ENCODE measurements at regions of chr11 and their contacts with region 1.

Region 1: GRCh38 chr11:10808553-10809372 is at the start of gene EIF4G2:
- DNase-seq: peak; percentile 96 to 99 (median 97)
- ATAC-seq: peak; percentile 91
- H3K4me3 ChIP-seq: peak within 1 kb of the TSS; percentile 86
- H3K4me3 Mint-ChIP-seq: peak within 1 kb of the TSS; percentile 99
- H3K27ac ChIP-seq: peak within 1 kb of the TSS; percentile 95 to 99
- H3K27ac Mint-ChIP-seq: peak within 1 kb of the TSS; percentile 100
- H3K4me1 ChIP-seq: peaks cover 30% of the 10 kb centered on the region
- H3K4me1 Mint-ChIP-seq: peaks cover 59% of the 10 kb centered on the region
- H3K27me3 ChIP-seq: no peaks in the 10 kb centered on the region
- H3K27me3 Mint-ChIP-seq: no peaks in the 10 kb centered on the region
- CTCF ChIP-seq: no peak
- total RNA-seq, gene EIF4G2: 1,001 to 1,008 TPM

Region 2: GRCh38 chr11:9314291-9315036 is 1494.3 kb before region 1 on chr11 and contains the start of gene TMEM41B:
- CTCF ChIA-PET with region 1: no interaction called
- POLR2A ChIA-PET with region 1: interaction called, 4 read pairs
- intact Hi-C with region 1: loop called in 1 of 2 experiments (anchors 5 kb)
- DNase-seq: peak; percentile 97 to 100 (median 99)
- ATAC-seq: peak; percentile 93
- H3K4me3 ChIP-seq: peak within 1 kb of the TSS; percentile 86
- H3K4me3 Mint-ChIP-seq: peak within 1 kb of the TSS; percentile 97
- H3K27ac ChIP-seq: peak within 1 kb of the TSS; percentile 88 to 92
- H3K27ac Mint-ChIP-seq: peak within 1 kb of the TSS; percentile 96
- H3K4me1 ChIP-seq: peaks cover 22% of the 10 kb centered on the region
- H3K4me1 Mint-ChIP-seq: peaks cover 49% of the 10 kb centered on the region
- H3K27me3 ChIP-seq: no peaks in the 10 kb centered on the region
- H3K27me3 Mint-ChIP-seq: peaks cover 19% of the 10 kb centered on the region
- CTCF ChIP-seq: no peak
- total RNA-seq, gene TMEM41B: 41.4 to 42.7 TPM

Region 3: GRCh38 chr11:10750838-10751580 is 57.8 kb before region 1 on chr11 and contains the start of gene CTR9:
- CTCF ChIA-PET with region 1: no interaction called
- POLR2A ChIA-PET with region 1: interaction called, 58 read pairs
- intact Hi-C with region 1: loop called in 1 of 2 experiments (anchors 2 kb)
- DNase-seq: peak; percentile 82 to 96 (median 90)
- ATAC-seq: peak; percentile 86
- H3K4me3 ChIP-seq: peak within 1 kb of the TSS; percentile 95
- H3K4me3 Mint-ChIP-seq: peak within 1 kb of the TSS; percentile 97
- H3K27ac ChIP-seq: peak within 1 kb of the TSS; percentile 83 to 84
- H3K27ac Mint-ChIP-seq: peak within 1 kb of the TSS; percentile 93
- H3K4me1 ChIP-seq: peaks cover 14% of the 10 kb centered on the region
- H3K4me1 Mint-ChIP-seq: peaks cover 35% of the 10 kb centered on the region
- H3K27me3 ChIP-seq: no peaks in the 10 kb centered on the region
- H3K27me3 Mint-ChIP-seq: no peaks in the 10 kb centered on the region
- CTCF ChIP-seq: no peak
- total RNA-seq, gene CTR9: 34.0 to 34.7 TPM

Region 4: GRCh38 chr11:10824888-10825287 is 16.1 kb after region 1 on chr11:
- CTCF ChIA-PET with region 1: no interaction called
- POLR2A ChIA-PET with region 1: interaction called, 27 read pairs
- intact Hi-C with region 1: no loop called
- DNase-seq: no peak
- ATAC-seq: no peak
- H3K4me3 ChIP-seq: no peak overlapping the region
- H3K4me3 Mint-ChIP-seq: no peak overlapping the region
- H3K27ac ChIP-seq: no peak overlapping the region
- H3K27ac Mint-ChIP-seq: no peak overlapping the region
- H3K4me1 ChIP-seq: no peaks in the 10 kb centered on the region
- H3K4me1 Mint-ChIP-seq: peaks cover 7% of the 10 kb centered on the region
- H3K27me3 ChIP-seq: no peaks in the 10 kb centered on the region
- H3K27me3 Mint-ChIP-seq: no peaks in the 10 kb centered on the region
- CTCF ChIP-seq: no peak

Region 5: DNA sequence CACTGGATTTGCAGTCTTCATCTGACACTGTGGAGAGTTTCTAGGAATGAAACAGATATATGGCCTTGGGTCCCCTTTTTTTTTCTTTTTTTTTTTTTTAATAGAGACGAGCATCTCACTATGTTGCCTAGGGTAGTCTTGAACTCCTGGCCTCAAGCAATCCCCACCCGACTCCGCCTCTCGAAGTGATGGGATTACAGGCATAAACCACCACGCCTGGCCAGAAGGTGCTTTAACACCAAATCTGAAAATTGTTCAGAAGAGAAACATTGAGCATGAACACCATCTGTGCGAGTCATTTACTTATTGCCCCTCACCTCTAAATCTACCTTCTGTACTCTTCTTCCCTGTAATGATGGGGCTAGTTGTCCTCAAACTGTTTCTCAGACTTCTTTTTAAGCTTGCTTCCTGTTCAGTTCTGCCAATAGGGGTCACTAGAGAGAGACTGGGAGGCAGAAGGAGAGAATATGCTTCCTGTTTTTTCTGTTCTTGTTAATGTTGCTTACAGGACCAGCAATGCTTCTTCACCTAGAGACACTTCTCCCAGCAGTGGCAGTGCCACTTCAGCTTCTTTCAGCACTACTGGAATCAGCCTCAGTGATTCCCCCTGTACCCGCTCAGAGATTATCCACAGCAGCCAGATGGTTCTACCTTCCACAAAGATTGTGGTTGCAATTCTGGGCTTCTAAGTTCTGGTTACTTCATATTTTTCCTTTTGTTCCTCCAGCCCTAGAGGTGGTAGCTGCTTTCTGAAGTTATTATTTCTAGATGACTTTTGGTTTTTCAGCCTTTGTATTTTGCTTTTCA is 69.8 kb after region 1 on chr11:
- CTCF ChIA-PET with region 1: interaction called, 25 read pairs
- POLR2A ChIA-PET with region 1: interaction called, 26 read pairs
- intact Hi-C with region 1: no loop called
- DNase-seq: peak in 4 of 14 experiments; percentile 44 to 83 (median 78)
- ATAC-seq: peak; percentile 87
- H3K4me3 ChIP-seq: no peak overlapping the region
- H3K4me3 Mint-ChIP-seq: no peak overlapping the region
- H3K27ac ChIP-seq: no peak overlapping the region
- H3K27ac Mint-ChIP-seq: no peak overlapping the region
- H3K4me1 ChIP-seq: peaks cover 7% of the 10 kb centered on the region
- H3K4me1 Mint-ChIP-seq: peaks cover 10% of the 10 kb centered on the region
- H3K27me3 ChIP-seq: no peaks in the 10 kb centered on the region
- H3K27me3 Mint-ChIP-seq: no peaks in the 10 kb centered on the region
- CTCF ChIP-seq: peak; percentile 77

Region 6: GRCh38 chr11:11148104-11148509 is 339.3 kb after region 1 on chr11:
- CTCF ChIA-PET with region 1: interaction called, 3 read pairs
- POLR2A ChIA-PET with region 1: interaction called, 26 read pairs
- intact Hi-C with region 1: loop called in 1 of 2 experiments (anchors 2 kb)
- DNase-seq: peak in 13 of 14 experiments; percentile 27 to 73 (median 48)
- ATAC-seq: peak; percentile 13
- H3K4me3 ChIP-seq: no peak overlapping the region
- H3K4me3 Mint-ChIP-seq: peak overlapping the region; percentile 63
- H3K27ac ChIP-seq: peak overlapping the region in 1 of 2 donors; percentile 95
- H3K27ac Mint-ChIP-seq: peak overlapping the region; percentile 95
- H3K4me1 ChIP-seq: peaks cover 45% of the 10 kb centered on the region
- H3K4me1 Mint-ChIP-seq: peaks cover 74% of the 10 kb centered on the region
- H3K27me3 ChIP-seq: no peaks in the 10 kb centered on the region
- H3K27me3 Mint-ChIP-seq: no peaks in the 10 kb centered on the region
- CTCF ChIP-seq: no peak

Region 7: GRCh38 chr11:11669233-11669846 is 860.6 kb after region 1 on chr11:
- CTCF ChIA-PET with region 1: no interaction called
- POLR2A ChIA-PET with region 1: no interaction called
- intact Hi-C with region 1: no loop called
- DNase-seq: no peak
- ATAC-seq: no peak
- H3K4me3 ChIP-seq: no peak overlapping the region
- H3K4me3 Mint-ChIP-seq: no peak overlapping the region
- H3K27ac ChIP-seq: no peak overlapping the region
- H3K27ac Mint-ChIP-seq: no peak overlapping the region
- H3K4me1 ChIP-seq: no peaks in the 10 kb centered on the region
- H3K4me1 Mint-ChIP-seq: no peaks in the 10 kb centered on the region
- H3K27me3 ChIP-seq: peaks cover 11 to 12% of the 10 kb centered on the region in 2 experiments
- H3K27me3 Mint-ChIP-seq: peaks cover 47% of the 10 kb centered on the region
- CTCF ChIP-seq: no peak